Posterior vena cava (tissue), 2 donors: ENCODE measurements at regions of chr18 and their contacts with region 1.

Region 1: GRCh38 chr18:44679056-44679905 is 1.4 kb upstream of the SETBP1 start:
- DNase-seq: peak; percentile 96

Region 2: GRCh38 chr18:44733069-44733753 is 53.9 kb after region 1 on chr18:
- intact Hi-C with region 1: loop called in 1 of 2 experiments (anchors 10 kb)
- DNase-seq: no peak

Region 3: GRCh38 chr18:44803019-44803650 is 123.9 kb after region 1 on chr18:
- intact Hi-C with region 1: loop called (anchors 10 kb)
- DNase-seq: no peak

Region 4: DNA sequence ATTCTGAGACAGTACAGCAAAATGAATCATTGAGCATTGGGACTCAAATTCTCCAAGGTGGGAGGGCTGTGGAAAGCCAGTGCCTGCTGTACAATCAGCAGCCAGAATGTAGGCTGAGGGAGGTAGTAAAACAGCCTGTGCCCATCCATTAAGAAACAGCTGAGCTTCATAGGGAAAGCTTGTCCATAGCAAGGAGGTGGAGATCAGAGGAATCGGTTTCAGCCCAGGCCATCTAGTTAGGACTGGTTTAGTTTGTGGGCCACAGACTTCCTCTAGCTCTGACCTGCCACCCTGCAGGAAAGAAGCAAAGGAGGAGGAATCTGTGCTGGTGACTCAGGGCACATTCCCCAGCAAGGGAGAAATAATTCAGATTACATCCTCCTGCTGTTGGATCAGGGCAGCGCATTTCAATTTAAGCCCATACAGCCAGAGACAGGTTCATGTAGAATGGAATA is 334.8 kb after region 1 on chr18:
- intact Hi-C with region 1: loop called in 1 of 2 experiments (anchors 10 kb)
- DNase-seq: no peak